CD4-positive, alpha-beta T cell (primary cell): ENCODE measurements at regions of chr7 and their contacts with region 1.

Region 1: DNA sequence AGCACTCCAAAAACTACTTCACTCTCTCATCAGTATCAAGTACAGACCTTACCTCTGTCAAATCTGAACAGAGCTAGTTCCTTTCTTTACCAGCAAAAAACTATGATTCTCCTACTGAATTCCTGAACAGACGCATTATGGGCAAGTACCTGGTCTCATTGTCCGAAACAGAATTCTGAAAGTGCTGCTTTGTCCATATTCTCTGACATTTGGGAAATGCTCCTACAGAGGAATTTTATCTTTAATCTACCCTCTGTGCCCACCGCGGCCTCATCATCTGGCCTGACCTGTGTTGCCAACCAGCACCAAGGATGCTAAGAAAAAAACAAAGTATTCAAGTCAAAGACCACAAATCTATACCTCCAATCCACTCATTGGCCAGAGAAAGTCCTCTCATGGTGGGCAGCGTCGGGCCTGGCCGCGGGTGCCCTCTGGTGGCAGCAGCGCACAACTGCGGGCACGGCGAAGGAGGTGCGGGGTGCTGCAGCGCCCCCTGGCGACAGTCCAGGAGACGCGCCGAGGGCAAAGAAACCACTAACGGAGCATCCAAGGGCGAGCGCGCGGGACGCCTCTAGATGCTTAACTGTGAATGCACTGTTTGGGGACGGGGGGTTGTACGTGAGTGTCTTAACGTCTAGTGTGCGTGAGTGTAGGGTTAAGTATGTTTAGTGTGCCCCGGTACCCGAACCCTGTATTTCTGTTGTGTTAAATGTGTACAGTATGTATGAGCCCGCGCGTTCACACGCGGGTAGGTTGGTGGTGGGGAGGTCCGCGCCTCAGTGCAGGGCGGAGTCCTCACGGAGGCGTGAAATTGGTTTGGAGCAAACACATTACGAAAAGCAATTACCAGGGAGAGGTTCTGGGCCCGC is 5.0 kb upstream of the GBX1 start:
- DNase-seq: peak; percentile 58 to 92 (median 75)
- ATAC-seq: peak; percentile 86
- H3K4me3 ChIP-seq: no peak overlapping the region
- H3K4me3 Mint-ChIP-seq: no peak overlapping the region
- H3K27ac ChIP-seq: no peak overlapping the region
- H3K27ac Mint-ChIP-seq: no peak overlapping the region
- H3K4me1 ChIP-seq: peaks cover 23% of the 10 kb centered on the region
- H3K4me1 Mint-ChIP-seq: peaks cover 7% of the 10 kb centered on the region
- H3K27me3 ChIP-seq: peaks cover 18 to 21% of the 10 kb centered on the region in 2 experiments
- H3K27me3 Mint-ChIP-seq: peaks cover 64% of the 10 kb centered on the region
- CTCF ChIP-seq: peak; percentile 100

Region 2: DNA sequence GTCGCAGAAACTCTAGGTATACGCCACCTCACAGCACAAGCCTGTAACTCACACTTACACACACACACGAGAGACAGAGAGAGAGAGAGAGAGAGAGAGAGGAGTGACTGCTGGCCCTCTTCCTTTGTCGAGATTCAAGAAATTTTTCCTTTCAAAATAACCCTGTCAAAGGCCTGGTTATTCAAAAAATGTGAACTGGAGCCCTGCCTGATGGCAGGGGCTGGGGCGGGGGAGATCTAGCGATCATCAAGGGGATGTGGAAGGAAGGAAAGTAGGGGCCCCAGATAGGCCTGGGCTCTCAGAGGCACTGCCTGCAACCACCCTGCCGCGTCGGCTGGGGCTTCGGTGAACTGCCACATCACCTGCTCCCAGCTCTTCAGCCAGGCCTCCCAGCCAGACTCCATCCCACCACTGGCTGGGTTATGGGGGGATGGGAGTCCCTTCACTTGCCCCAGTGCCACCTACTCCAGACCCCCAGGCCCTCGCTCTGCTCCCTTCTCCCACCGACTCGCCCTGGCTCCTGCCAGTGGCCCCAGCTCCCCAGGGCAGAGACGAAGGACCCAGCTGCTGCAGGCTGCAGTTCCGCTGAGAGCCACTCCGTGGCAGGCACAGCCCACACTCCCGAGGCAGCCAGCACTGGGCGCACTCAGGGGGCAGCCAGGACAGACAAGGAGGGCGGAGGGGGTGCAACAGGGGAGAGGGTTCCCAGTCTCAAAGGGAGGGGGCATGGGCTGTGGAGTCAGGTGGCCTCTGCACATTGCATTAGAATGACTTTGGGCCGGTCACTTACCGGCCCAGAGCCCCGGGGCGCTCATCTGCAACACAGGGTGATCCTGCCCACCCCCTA is 209.7 kb before region 1 on chr7:
- CTCF ChIA-PET with region 1: no interaction called
- POLR2A ChIA-PET with region 1: no interaction called
- intact Hi-C with region 1: loop called in 1 of 2 experiments (anchors 1 kb)
- DNase-seq: peak; percentile 41 to 81 (median 57)
- ATAC-seq: peak; percentile 90
- H3K4me3 ChIP-seq: no peak overlapping the region
- H3K4me3 Mint-ChIP-seq: no peak overlapping the region
- H3K27ac ChIP-seq: no peak overlapping the region
- H3K27ac Mint-ChIP-seq: no peak overlapping the region
- H3K4me1 ChIP-seq: peaks cover 22% of the 10 kb centered on the region
- H3K4me1 Mint-ChIP-seq: peaks cover 27% of the 10 kb centered on the region
- H3K27me3 ChIP-seq: peaks cover 11 to 15% of the 10 kb centered on the region in 2 experiments
- H3K27me3 Mint-ChIP-seq: peaks cover 28% of the 10 kb centered on the region
- CTCF ChIP-seq: peak; percentile 95

Region 3: GRCh38 chr7:151123822-151124464 is 48.6 kb before region 1 on chr7:
- CTCF ChIA-PET with region 1: interaction called, 3 read pairs
- POLR2A ChIA-PET with region 1: no interaction called
- intact Hi-C with region 1: loop called (anchors 1 kb)
- DNase-seq: peak; percentile 74 to 91 (median 80)
- ATAC-seq: peak; percentile 99
- H3K4me3 ChIP-seq: no peak overlapping the region
- H3K4me3 Mint-ChIP-seq: peak overlapping the region; percentile 6
- H3K27ac ChIP-seq: no peak overlapping the region
- H3K27ac Mint-ChIP-seq: no peak overlapping the region
- H3K4me1 ChIP-seq: peaks cover 9% of the 10 kb centered on the region
- H3K4me1 Mint-ChIP-seq: peaks cover 6% of the 10 kb centered on the region
- H3K27me3 ChIP-seq: no peaks in the 10 kb centered on the region
- H3K27me3 Mint-ChIP-seq: no peaks in the 10 kb centered on the region
- CTCF ChIP-seq: peak; percentile 94

Region 4: DNA sequence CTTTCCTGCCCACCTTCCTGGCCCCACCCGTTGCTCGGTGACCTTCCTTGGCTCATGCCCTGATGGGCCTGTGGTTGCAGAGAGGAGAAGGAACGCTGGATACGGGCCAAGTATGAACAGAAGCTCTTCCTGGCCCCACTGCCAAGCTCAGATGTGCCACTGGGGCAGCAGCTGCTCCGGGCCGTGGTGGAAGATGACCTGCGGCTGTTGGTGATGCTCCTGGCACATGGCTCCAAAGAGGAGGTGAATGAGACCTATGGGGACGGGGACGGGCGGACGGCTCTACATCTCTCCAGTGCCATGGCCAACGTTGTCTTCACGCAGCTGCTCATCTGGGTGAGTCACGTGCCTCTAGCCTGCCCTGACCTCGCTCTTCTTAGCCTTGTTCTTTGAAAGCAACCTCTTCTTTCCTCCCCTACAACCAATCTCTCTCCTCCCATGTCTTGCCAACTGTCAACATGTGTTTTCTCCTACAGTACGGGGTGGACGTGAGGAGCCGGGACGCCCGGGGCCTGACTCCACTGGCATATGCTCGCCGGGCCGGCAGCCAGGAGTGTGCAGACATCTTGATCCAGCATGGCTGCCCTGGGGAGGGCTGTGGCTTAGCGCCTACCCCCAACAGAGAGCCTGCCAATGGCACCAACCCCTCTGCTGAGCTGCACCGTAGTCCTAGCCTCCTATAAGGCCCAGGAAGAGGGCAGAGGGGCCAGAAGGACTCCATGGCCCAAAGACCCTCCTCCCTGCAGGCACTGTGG is 29.1 kb before region 1 on chr7:
- CTCF ChIA-PET with region 1: no interaction called
- POLR2A ChIA-PET with region 1: no interaction called
- intact Hi-C with region 1: no loop called
- DNase-seq: no peak
- ATAC-seq: no peak
- H3K4me3 ChIP-seq: no peak overlapping the region
- H3K4me3 Mint-ChIP-seq: no peak overlapping the region
- H3K27ac ChIP-seq: no peak overlapping the region
- H3K27ac Mint-ChIP-seq: no peak overlapping the region
- H3K4me1 ChIP-seq: no peaks in the 10 kb centered on the region
- H3K4me1 Mint-ChIP-seq: no peaks in the 10 kb centered on the region
- H3K27me3 ChIP-seq: peaks cover under 1% of the 10 kb centered on the region in 2 experiments
- H3K27me3 Mint-ChIP-seq: peaks cover 9% of the 10 kb centered on the region
- CTCF ChIP-seq: no peak

Region 5: GRCh38 chr7:151304856-151305255 is 132.3 kb after region 1 on chr7:
- CTCF ChIA-PET with region 1: no interaction called
- POLR2A ChIA-PET with region 1: no interaction called
- intact Hi-C with region 1: loop called in 1 of 2 experiments (anchors 2 kb)
- DNase-seq: peak in 1 of 14 experiments; percentile 6
- ATAC-seq: no peak
- H3K4me3 ChIP-seq: no peak overlapping the region
- H3K4me3 Mint-ChIP-seq: peak overlapping the region; percentile 30
- H3K27ac ChIP-seq: no peak overlapping the region
- H3K27ac Mint-ChIP-seq: no peak overlapping the region
- H3K4me1 ChIP-seq: peaks cover 11% of the 10 kb centered on the region
- H3K4me1 Mint-ChIP-seq: peaks cover 8% of the 10 kb centered on the region
- H3K27me3 ChIP-seq: peaks cover 26 to 37% of the 10 kb centered on the region in 2 experiments
- H3K27me3 Mint-ChIP-seq: peaks cover 43% of the 10 kb centered on the region
- CTCF ChIP-seq: no peak